Right cardiac atrium (tissue), 5 donors: ENCODE measurements at regions of chr2 and their contacts with region 1.

Region 1: GRCh38 chr2:42959234-42960001 is 167.0 kb upstream of the HAAO start:
- DNase-seq: peak; percentile 79 to 92 (median 89)
- ATAC-seq: peak; percentile 85
- H3K4me3 ChIP-seq: no peak overlapping the region
- H3K27ac ChIP-seq: peak overlapping the region; percentile 90
- H3K4me1 ChIP-seq: peaks cover 27% of the 10 kb centered on the region
- H3K27me3 ChIP-seq: no peaks in the 10 kb centered on the region

Region 2: DNA sequence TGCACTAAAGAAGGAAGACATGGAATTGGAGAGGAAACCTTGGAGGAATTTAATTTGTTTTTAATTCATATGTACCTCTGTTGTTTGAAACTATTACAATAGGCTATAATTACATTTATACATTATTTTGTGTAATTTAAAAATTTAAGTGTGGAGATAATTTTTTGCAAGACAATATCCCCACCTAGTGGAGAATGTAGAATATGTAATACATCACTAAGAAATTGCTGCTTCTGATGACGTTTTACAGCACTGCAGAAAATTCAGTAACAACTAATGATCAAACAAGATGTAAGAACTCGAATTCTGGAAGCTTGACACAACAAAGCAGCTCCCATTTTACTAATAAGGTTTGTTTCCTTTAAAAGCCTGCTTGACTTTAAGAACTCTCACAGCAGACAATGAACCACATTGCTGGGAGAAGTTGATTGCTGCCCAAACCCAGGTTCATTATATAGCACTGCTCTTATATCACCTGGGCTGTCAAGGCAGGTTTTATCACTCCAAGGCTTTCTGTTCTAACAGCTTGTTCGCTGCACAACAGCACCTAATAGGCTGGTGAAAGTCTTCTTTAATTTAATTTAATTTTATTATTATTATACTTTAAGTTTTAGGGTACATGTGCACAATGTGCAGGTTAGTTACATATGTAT is 583.0 kb after region 1 on chr2:
- intact Hi-C with region 1: loop called in 1 of 4 experiments (anchors 10 kb)
- DNase-seq: no peak
- ATAC-seq: peak; percentile 23 to 27
- H3K4me3 ChIP-seq: no peak overlapping the region
- H3K27ac ChIP-seq: no peak overlapping the region
- H3K4me1 ChIP-seq: no peaks in the 10 kb centered on the region
- H3K27me3 ChIP-seq: no peaks in the 10 kb centered on the region